Left ventricle myocardium superior (tissue), 1 donor: ENCODE measurements at regions of chr2 and their contacts with region 1.

Region 1: GRCh38 chr2:62410015-62410453 is 96.0 kb downstream of the TMEM17 start:
- DNase-seq: no peak
- ATAC-seq: peak; percentile 27

Region 2: DNA sequence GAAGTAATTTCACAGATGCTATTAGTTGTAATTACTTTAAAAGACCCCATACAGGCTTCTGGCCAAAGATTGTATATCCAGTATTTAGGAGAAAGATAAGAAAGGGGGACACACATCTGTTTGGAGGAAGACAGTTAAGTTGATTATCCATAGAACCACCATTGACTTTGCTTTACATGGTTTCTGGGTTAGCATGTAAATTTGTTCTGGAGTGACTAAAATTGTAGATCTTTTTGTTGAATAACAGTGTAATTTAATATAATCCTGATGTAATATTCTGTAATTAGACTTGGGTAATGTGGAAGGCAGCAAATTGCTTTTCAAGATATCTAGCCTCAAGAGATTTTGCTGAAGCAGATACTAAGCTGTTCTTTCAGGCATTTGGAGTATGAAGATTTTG is 487.3 kb before region 1 on chr2:
- intact Hi-C with region 1: loop called (anchors 2 kb)
- DNase-seq: no peak
- ATAC-seq: no peak

Region 3: GRCh38 chr2:61993444-61994024 is 416.5 kb before region 1 on chr2:
- intact Hi-C with region 1: loop called (anchors 5 kb)
- DNase-seq: no peak
- ATAC-seq: peak; percentile 65

Region 4: GRCh38 chr2:62536873-62537547 is 127.0 kb after region 1 on chr2:
- intact Hi-C with region 1: no loop called
- DNase-seq: no peak
- ATAC-seq: no peak

Region 5: GRCh38 chr2:62956651-62957050 is 546.6 kb after region 1 on chr2:
- intact Hi-C with region 1: no loop called
- DNase-seq: no peak
- ATAC-seq: no peak